T-cell (primary cell): ENCODE measurements at regions of chr20 and their contacts with region 1.

Region 1: GRCh38 chr20:13784893-13785715 is at the starts of genes ESF1 and NDUFAF5:
- DNase-seq: peak; percentile 81 to 94 (median 89)
- ATAC-seq: peak; percentile 96 to 98 (median 97)
- H3K4me3 ChIP-seq: peak within 1 kb of the TSS; percentile 89 to 91
- H3K4me3 Mint-ChIP-seq: peak within 1 kb of the TSS; percentile 97 to 100 (median 99)
- H3K27ac ChIP-seq: peak within 1 kb of the TSS; percentile 90
- H3K27ac Mint-ChIP-seq: peak within 1 kb of the TSS; percentile 96 to 97
- H3K4me1 ChIP-seq: peaks cover 14 to 30% of the 10 kb centered on the region in 2 experiments
- H3K4me1 Mint-ChIP-seq: peaks cover 64 to 71% (median 66%) of the 10 kb centered on the region in 3 donors
- H3K27me3 ChIP-seq: no peaks in the 10 kb centered on the region
- H3K27me3 Mint-ChIP-seq: no peaks in the 10 kb centered on the region
- total RNA-seq, gene ESF1: 9.4 to 14.2 (median 12.2) TPM
- total RNA-seq, gene NDUFAF5: 25.6 to 39.4 (median 30.1) TPM

Region 2: DNA sequence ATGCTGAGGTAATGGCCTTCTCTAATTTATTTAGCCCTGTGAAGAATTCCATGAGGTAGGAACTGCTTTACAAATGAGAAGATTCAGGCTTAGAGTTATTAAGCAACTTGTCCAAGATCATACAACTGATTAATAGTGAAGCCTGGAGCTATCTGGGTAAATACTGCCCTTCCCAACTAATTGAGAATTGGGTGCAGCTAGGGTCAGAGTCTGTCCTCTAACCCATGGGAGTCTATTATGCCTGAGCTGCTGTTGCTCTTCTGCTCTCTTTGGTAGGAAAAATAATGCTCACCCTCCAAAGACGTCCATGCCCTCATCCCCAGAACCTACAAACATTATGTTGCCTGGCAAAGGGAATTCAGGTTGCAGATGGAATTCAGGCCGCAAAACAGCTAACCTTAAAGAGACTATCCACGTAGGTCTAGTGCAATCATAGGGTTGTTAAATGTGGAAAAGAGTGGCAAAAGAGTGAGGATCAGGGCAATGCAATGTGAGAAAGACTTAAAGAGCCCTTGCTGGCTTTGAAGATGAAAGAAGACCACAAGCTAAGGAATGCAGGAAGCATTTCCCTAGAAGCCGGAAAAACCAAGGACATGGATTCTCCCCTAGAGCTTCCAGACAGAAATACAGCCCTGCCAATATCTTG is 686.3 kb before region 1 on chr20:
- CTCF ChIA-PET with region 1: no interaction called
- POLR2A ChIA-PET with region 1: interaction called in 1 of 2 experiments, 11 read pairs
- DNase-seq: no peak
- ATAC-seq: no peak
- H3K4me3 ChIP-seq: no peak overlapping the region
- H3K4me3 Mint-ChIP-seq: no peak overlapping the region
- H3K27ac ChIP-seq: no peak overlapping the region
- H3K27ac Mint-ChIP-seq: no peak overlapping the region
- H3K4me1 ChIP-seq: no peaks in the 10 kb centered on the region
- H3K4me1 Mint-ChIP-seq: no peaks in the 10 kb centered on the region
- H3K27me3 ChIP-seq: no peaks in the 10 kb centered on the region
- H3K27me3 Mint-ChIP-seq: no peaks in the 10 kb centered on the region

Region 3: DNA sequence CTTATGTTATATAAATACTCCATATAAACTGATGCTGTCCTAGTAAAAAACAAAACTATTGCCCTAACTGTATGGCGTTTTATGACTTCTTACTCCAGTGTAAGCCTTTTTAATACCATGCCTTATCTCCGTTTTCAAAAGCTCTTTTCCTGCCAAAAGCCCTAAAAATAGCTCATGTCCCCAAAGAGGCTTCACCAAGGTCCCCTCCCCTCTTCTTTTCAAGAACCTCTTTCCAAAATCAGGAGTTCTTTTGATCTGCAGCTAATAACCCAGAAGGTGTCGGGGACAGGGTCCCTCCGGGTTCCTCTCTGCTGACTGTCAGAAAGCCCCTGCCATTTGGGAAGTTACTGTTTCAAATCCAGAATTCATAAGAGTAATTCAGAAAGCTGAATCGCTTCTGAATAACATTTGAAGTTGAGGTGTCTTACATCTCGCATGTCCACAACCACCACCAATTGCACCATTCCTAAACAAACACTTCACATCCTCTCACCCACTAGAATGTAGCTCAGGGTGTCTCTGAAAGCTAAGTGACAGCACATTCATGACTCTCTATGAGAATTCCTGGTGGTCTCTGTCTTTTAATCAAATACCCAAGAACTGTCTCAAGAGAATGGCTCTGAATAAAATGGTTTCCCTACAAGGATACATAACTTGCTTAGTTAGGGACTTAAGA is 159.7 kb before region 1 on chr20:
- CTCF ChIA-PET with region 1: no interaction called
- POLR2A ChIA-PET with region 1: no interaction called
- DNase-seq: no peak
- ATAC-seq: no peak
- H3K4me3 ChIP-seq: no peak overlapping the region
- H3K4me3 Mint-ChIP-seq: no peak overlapping the region
- H3K27ac ChIP-seq: no peak overlapping the region
- H3K27ac Mint-ChIP-seq: no peak overlapping the region
- H3K4me1 ChIP-seq: no peaks in the 10 kb centered on the region
- H3K4me1 Mint-ChIP-seq: peaks cover 0 to 5% (median 0%) of the 10 kb centered on the region in 3 donors
- H3K27me3 ChIP-seq: no peaks in the 10 kb centered on the region
- H3K27me3 Mint-ChIP-seq: no peaks in the 10 kb centered on the region

Region 4: GRCh38 chr20:13771853-13772453 is 13.2 kb before region 1 on chr20:
- CTCF ChIA-PET with region 1: interaction called, 24 to 39 read pairs
- POLR2A ChIA-PET with region 1: interaction called in 1 of 2 experiments, 5 read pairs
- DNase-seq: peak in 1 of 35 experiments; percentile 21
- ATAC-seq: no peak
- H3K4me3 ChIP-seq: no peak overlapping the region
- H3K4me3 Mint-ChIP-seq: no peak overlapping the region
- H3K27ac ChIP-seq: no peak overlapping the region
- H3K27ac Mint-ChIP-seq: no peak overlapping the region
- H3K4me1 ChIP-seq: no peaks in the 10 kb centered on the region
- H3K4me1 Mint-ChIP-seq: peaks cover 7 to 13% (median 8%) of the 10 kb centered on the region in 3 donors
- H3K27me3 ChIP-seq: no peaks in the 10 kb centered on the region
- H3K27me3 Mint-ChIP-seq: no peaks in the 10 kb centered on the region